Activated CD4-positive, alpha-beta T cell treated with anti-CD3 and anti-CD28 coated beads, Interleukin-2, amount 10 ng/mL, durations not matched to agents 7 days and 5 days (primary cell): ENCODE measurements at regions of chr12 and their contacts with region 1.

Region 1: DNA sequence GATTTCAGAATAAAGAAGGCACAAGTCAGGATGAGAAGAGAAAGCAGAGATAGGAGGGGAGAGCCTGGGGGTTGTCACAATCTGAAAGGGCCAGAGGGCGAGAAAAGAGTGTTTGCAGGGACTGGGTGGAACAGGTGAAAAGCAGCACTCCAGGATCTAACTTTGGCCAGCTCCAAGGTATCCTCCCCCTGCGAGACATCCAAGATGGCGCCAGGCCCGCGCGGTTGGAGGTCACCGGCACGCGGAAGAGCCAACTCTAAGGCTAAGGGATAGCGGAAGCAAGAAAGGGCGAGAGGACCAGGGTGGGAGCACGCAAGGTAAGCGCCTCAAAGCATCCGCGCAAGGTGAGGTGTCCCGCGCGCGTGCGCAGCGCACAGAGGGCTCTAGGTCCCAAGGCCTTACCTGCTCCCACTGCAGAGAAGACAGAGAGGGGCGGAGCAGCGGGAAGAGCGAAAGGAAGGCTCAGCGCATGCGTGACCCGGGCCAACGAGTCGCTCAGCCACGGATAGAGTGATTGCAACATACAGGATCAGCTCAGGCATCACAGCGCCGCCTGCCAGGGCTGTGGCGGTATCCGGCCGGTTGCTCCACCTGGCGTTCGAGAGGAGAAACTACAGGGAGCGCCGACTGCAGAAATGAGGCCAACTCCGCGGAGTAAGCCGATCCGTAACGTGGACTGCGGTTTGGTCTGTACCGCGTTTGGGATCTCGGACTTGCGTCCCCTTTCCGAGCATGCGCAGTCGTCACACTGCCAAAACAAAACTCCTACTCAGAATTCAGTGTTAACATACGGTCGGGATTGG is at the start of gene ATP5MC2:
- DNase-seq: peak; percentile 97
- H3K4me3 Mint-ChIP-seq: peak within 1 kb of the TSS; percentile 92
- H3K27ac Mint-ChIP-seq: peak within 1 kb of the TSS; percentile 97
- H3K4me1 Mint-ChIP-seq: peaks cover 39% of the 10 kb centered on the region
- H3K27me3 Mint-ChIP-seq: peaks cover 29% of the 10 kb centered on the region
- total RNA-seq, gene ATP5MC2: 298 to 356 TPM

Region 2: GRCh38 chr12:53543539-53543938 is 132.3 kb before region 1 on chr12:
- CTCF ChIA-PET with region 1: interaction called, 24 read pairs
- POLR2A ChIA-PET with region 1: interaction called, 9 read pairs
- DNase-seq: peak; percentile 68
- H3K4me3 Mint-ChIP-seq: no peak overlapping the region
- H3K27ac Mint-ChIP-seq: peak overlapping the region; percentile 70
- H3K4me1 Mint-ChIP-seq: peaks cover 14% of the 10 kb centered on the region
- H3K27me3 Mint-ChIP-seq: no peaks in the 10 kb centered on the region

Region 3: GRCh38 chr12:53623548-53624385 is 52.1 kb before region 1 on chr12:
- CTCF ChIA-PET with region 1: interaction called, 22 read pairs
- POLR2A ChIA-PET with region 1: no interaction called
- DNase-seq: no peak
- H3K4me3 Mint-ChIP-seq: peak overlapping the region; percentile 100
- H3K27ac Mint-ChIP-seq: peak overlapping the region; percentile 63
- H3K4me1 Mint-ChIP-seq: peaks cover 49% of the 10 kb centered on the region
- H3K27me3 Mint-ChIP-seq: no peaks in the 10 kb centered on the region

Region 4: GRCh38 chr12:53701518-53702260 is 25.8 kb after region 1 on chr12:
- CTCF ChIA-PET with region 1: interaction called, 12 read pairs
- POLR2A ChIA-PET with region 1: no interaction called
- DNase-seq: peak; percentile 75
- H3K4me3 Mint-ChIP-seq: no peak overlapping the region
- H3K27ac Mint-ChIP-seq: peak overlapping the region; percentile 50
- H3K4me1 Mint-ChIP-seq: peaks cover 7% of the 10 kb centered on the region
- H3K27me3 Mint-ChIP-seq: peaks cover 84% of the 10 kb centered on the region